Activated CD4-positive, alpha-beta T cell treated with anti-CD3 and anti-CD28 coated beads, Interleukin-2, amount 10 ng/mL, durations not matched to agents 7 days and 5 days (primary cell): ENCODE measurements at regions of chr20 and their contacts with region 1.

Region 1: GRCh38 chr20:35146920-35147574 is at the start of gene EDEM2:
- DNase-seq: peak; percentile 95
- H3K4me3 Mint-ChIP-seq: peak within 1 kb of the TSS; percentile 95
- H3K27ac Mint-ChIP-seq: peak within 1 kb of the TSS; percentile 93
- H3K4me1 Mint-ChIP-seq: peaks cover 31% of the 10 kb centered on the region
- H3K27me3 Mint-ChIP-seq: peaks cover 3% of the 10 kb centered on the region
- total RNA-seq, gene EDEM2: 22.8 to 25.0 TPM

Region 2: GRCh38 chr20:35171753-35172433 is 24.8 kb after region 1 on chr20 and contains the start of gene PROCR:
- CTCF ChIA-PET with region 1: no interaction called
- POLR2A ChIA-PET with region 1: no interaction called
- DNase-seq: peak; percentile 9
- H3K4me3 Mint-ChIP-seq: peak within 1 kb of the TSS; percentile 63
- H3K27ac Mint-ChIP-seq: no peak within 1 kb of the TSS
- H3K4me1 Mint-ChIP-seq: peaks cover 13% of the 10 kb centered on the region
- H3K27me3 Mint-ChIP-seq: no peaks in the 10 kb centered on the region
- total RNA-seq, gene PROCR: 0.35 to 0.50 TPM

Region 3: GRCh38 chr20:35269055-35269781 is 122.2 kb after region 1 on chr20:
- CTCF ChIA-PET with region 1: interaction called, 10 read pairs
- POLR2A ChIA-PET with region 1: interaction called, 6 read pairs
- DNase-seq: peak; percentile 60
- H3K4me3 Mint-ChIP-seq: no peak overlapping the region
- H3K27ac Mint-ChIP-seq: no peak overlapping the region
- H3K4me1 Mint-ChIP-seq: peaks cover 9% of the 10 kb centered on the region
- H3K27me3 Mint-ChIP-seq: no peaks in the 10 kb centered on the region